GM12878 (cell line): ENCODE measurements at regions of chr15 and their contacts with region 1.

Region 1: DNA sequence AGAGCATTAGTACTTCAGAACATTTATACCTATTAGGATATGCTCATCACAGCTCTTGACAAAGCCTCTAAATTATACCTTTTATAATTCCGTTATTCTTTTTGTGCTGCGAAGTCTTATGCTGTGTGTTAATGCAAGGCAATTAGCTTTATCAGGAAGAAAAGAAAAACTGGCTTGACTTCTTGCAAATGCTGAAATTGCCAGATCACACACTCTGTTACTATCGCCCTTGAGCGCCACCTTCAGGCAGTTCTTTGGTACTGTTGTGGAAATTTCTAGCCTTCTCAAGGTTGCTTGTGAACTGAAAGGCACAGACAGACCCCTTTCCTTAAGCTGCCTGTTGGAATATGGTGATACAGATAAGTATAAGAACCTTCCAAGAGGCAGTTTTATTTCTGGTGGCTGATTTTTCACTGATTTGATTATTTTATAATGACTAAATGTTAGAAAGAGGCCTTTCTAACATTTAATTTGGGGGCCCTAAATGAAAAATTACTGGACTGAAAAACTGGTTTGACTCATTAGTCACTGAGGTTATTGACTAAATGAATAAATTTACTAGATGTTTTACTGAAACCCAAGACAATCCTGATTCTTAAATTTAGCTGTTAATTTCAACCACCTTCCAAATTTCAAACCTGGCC is 126.2 kb upstream of the RASGRP1 start:
- DNase-seq: no peak
- ATAC-seq: peak; percentile 68
- H3K4me3 ChIP-seq: no peak overlapping the region
- H3K27ac ChIP-seq: peak overlapping the region; percentile 27; the same call in 1 of the 2 replicates
- H3K4me1 ChIP-seq: peaks cover 28% of the 10 kb centered on the region
- H3K27me3 ChIP-seq: no peaks in the 10 kb centered on the region
- CTCF ChIP-seq: peak; percentile 85 to 89 (median 87); a peak in 5 of 6 replicates
- EP300 ChIP-seq: no peak
- POLR2A ChIP-seq: no peak
- RAD21 ChIP-seq: peak; percentile 79

Region 2: DNA sequence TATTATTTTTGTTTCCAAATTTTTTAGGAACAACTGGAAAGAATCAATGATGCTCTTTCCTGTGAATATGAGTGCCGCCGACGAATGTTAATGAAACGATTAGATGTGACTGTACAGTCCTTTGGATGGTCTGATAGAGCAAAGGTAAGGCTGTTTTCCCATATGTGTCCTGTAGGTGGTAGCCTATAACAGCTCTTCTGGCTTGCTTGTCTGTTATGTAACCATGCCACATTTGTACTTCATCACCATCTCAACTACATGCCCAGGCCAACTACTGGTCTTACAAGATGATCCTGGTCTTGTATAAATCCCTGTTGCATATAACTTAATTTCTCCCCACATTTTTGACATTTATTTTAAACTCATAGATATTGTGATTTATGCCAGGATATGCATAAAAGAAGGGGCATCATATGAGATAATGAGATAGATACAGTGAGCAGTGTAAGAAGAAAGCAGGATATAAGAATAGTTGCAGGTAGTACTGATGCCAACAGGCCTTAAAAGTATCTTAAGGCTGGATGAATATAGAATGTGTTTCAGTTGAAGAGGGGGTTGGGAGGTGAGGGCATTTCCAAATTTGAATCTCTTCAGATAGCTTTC is 216.6 kb before region 1 on chr15:
- CTCF ChIA-PET with region 1: interaction called, 219 read pairs
- POLR2A ChIA-PET with region 1: interaction called, 8 read pairs
- RAD21 ChIA-PET with region 1: interaction called, 148 read pairs
- SMC1A ChIA-PET with region 1: interaction called, 138 read pairs
- in situ Hi-C with region 1: no loop called
- intact Hi-C with region 1: loop called (anchors 2 kb)
- DNase-seq: peak; percentile 33
- ATAC-seq: peak; percentile 99
- H3K4me3 ChIP-seq: no peak overlapping the region
- H3K27ac ChIP-seq: no peak overlapping the region
- H3K4me1 ChIP-seq: no peaks in the 10 kb centered on the region
- H3K27me3 ChIP-seq: no peaks in the 10 kb centered on the region
- CTCF ChIP-seq: peak; percentile 67 to 92 (median 74); a peak in 5 of 6 replicates
- EP300 ChIP-seq: no peak
- POLR2A ChIP-seq: no peak
- RAD21 ChIP-seq: peak; percentile 84

Region 3: DNA sequence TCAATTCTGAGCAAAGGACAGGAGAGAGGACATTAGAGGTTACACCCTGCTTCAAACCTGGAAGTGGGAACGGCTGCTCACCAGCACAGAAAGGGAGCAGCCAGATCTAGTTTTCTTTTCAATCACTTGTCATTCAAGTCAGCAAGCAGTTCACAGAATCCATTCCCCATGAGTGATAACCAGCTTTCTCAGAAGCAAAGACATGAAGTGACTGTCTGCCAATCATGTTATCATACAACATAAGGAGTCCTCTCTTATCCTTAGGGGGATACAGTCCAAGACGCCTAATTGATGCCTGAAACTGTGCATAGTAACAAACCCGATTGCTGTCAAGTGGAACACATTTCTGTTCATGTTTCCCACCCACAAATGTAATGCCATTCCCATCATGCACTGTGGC is 182.2 kb before region 1 on chr15:
- CTCF ChIA-PET with region 1: interaction called, 37 read pairs
- POLR2A ChIA-PET with region 1: no interaction called
- RAD21 ChIA-PET with region 1: interaction called, 5 read pairs
- SMC1A ChIA-PET with region 1: interaction called, 208 read pairs
- in situ Hi-C with region 1: no loop called
- intact Hi-C with region 1: no loop called
- DNase-seq: peak; percentile 47
- ATAC-seq: peak; percentile 68
- H3K4me3 ChIP-seq: no peak overlapping the region
- H3K27ac ChIP-seq: peak overlapping the region; percentile 50
- H3K4me1 ChIP-seq: peaks cover 11% of the 10 kb centered on the region
- H3K27me3 ChIP-seq: no peaks in the 10 kb centered on the region
- CTCF ChIP-seq: no peak
- EP300 ChIP-seq: no peak
- POLR2A ChIP-seq: no peak
- RAD21 ChIP-seq: no peak

Region 4: DNA sequence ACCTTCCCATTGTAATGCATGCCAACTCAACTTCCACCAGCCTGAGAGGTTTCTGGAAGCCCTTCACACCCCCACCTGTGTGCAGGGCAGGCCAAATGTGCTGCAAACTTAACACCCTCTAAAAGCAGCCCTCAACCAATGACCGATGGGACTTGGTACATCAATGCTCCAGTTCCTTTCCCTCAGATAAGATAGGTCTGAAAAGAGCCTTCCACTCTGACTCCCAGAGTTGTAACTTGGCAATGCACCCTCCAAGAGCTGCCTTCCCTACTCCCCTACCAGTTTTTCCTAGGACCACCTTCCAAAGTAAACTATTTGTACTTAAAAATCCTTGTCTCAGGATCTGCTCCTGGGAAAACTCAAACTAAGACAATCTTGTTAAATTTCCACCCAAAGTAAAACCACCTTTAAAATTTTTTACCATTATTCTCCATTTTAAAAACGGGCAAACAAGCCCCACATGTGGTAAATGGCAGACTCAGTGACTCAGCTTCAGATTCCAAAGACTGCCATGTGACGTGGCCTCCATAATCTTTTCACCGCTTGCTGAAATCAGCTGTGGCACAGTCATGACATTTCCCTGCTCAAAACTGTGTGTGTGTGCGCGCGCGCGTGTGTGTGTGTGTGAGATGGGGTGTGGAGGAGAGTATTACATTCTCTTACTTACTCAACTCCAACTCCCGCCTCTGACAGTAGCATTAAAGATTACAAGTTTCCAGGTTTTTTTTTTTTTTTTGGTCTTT is 143.4 kb before region 1 on chr15:
- CTCF ChIA-PET with region 1: interaction called, 24 read pairs
- POLR2A ChIA-PET with region 1: no interaction called
- RAD21 ChIA-PET with region 1: interaction called, 19 read pairs
- SMC1A ChIA-PET with region 1: interaction called, 77 read pairs
- in situ Hi-C with region 1: no loop called
- intact Hi-C with region 1: no loop called
- DNase-seq: no peak
- ATAC-seq: no peak
- H3K4me3 ChIP-seq: no peak overlapping the region
- H3K27ac ChIP-seq: no peak overlapping the region
- H3K4me1 ChIP-seq: no peaks in the 10 kb centered on the region
- H3K27me3 ChIP-seq: no peaks in the 10 kb centered on the region
- CTCF ChIP-seq: no peak
- EP300 ChIP-seq: no peak
- POLR2A ChIP-seq: no peak
- RAD21 ChIP-seq: no peak

Region 5: DNA sequence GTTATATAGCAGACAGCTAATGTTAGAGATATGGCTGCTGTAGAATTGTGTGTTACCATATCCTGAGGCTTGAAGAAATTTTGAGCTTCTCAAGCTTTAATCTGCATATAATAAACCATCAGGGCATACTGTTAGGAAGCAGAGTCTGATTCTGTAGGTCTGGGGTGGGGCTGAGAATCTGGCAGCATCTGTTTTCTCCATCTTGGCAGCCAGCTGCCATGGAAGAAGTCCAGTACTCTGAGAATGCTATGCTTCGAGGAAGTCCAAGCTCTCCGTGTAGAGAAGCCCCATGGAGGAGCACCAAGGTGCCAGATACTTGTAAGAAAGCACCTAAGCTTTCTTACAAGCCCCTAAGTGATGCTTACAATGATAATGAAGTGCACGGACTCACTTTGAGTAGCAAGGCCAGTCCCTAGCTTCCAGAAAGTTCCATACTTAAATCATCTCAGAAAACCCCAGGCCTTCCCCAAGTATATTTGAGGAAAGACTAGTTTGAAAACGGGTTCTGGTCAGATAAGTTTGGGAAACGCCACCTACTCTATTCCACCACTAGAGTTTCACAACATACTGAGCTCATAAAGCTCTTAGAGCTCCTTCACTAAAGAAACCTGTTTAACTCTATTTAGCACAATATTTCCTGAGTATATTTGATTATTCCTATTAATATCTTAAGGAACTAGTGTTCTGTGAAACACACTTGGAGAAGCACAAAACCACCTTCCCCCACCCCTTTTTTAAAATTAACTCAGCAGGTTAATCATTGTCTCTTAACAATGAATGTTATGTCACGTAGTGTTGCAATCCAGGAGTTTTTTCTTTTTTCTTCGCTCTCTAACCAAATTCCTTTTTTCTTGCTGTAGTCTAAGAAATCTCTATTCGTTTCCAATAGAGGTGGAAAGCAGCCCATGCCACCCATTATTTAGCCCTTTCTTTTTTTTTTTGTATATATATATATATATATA is 66.3 kb before region 1 on chr15:
- CTCF ChIA-PET with region 1: interaction called, 52 read pairs
- POLR2A ChIA-PET with region 1: interaction called, 9 read pairs
- RAD21 ChIA-PET with region 1: interaction called, 322 read pairs
- SMC1A ChIA-PET with region 1: interaction called, 154 read pairs
- in situ Hi-C with region 1: no loop called
- intact Hi-C with region 1: no loop called
- DNase-seq: no peak
- ATAC-seq: peak; percentile 33
- H3K4me3 ChIP-seq: no peak overlapping the region
- H3K27ac ChIP-seq: no peak overlapping the region
- H3K4me1 ChIP-seq: no peaks in the 10 kb centered on the region
- H3K27me3 ChIP-seq: no peaks in the 10 kb centered on the region
- CTCF ChIP-seq: 0 out of 6 replicates have a peak, but pooled peaks of 1 of the 3 experiments have one; percentile 3
- EP300 ChIP-seq: no peak
- POLR2A ChIP-seq: no peak
- RAD21 ChIP-seq: no peak

Region 6: GRCh38 chr15:38665586-38666305 is 25.1 kb before region 1 on chr15:
- CTCF ChIA-PET with region 1: interaction called, 173 read pairs
- POLR2A ChIA-PET with region 1: interaction called, 45 read pairs
- RAD21 ChIA-PET with region 1: interaction called, 134 read pairs
- SMC1A ChIA-PET with region 1: interaction called, 225 read pairs
- in situ Hi-C with region 1: no loop called
- intact Hi-C with region 1: no loop called
- DNase-seq: no peak
- ATAC-seq: no peak
- H3K4me3 ChIP-seq: no peak overlapping the region
- H3K27ac ChIP-seq: no peak overlapping the region
- H3K4me1 ChIP-seq: peaks cover 17% of the 10 kb centered on the region
- H3K27me3 ChIP-seq: no peaks in the 10 kb centered on the region
- CTCF ChIP-seq: no peak
- EP300 ChIP-seq: no peak
- POLR2A ChIP-seq: no peak
- RAD21 ChIP-seq: no peak

Region 7: GRCh38 chr15:38768970-38769369 is 78.2 kb after region 1 on chr15:
- CTCF ChIA-PET with region 1: no interaction called
- POLR2A ChIA-PET with region 1: no interaction called
- RAD21 ChIA-PET with region 1: no interaction called
- SMC1A ChIA-PET with region 1: no interaction called
- in situ Hi-C with region 1: no loop called
- intact Hi-C with region 1: no loop called
- DNase-seq: no peak
- ATAC-seq: 0 out of 3 replicates have a peak, but pooled peaks have one; percentile 29
- H3K4me3 ChIP-seq: no peak overlapping the region
- H3K27ac ChIP-seq: no peak overlapping the region
- H3K4me1 ChIP-seq: no peaks in the 10 kb centered on the region
- H3K27me3 ChIP-seq: peaks cover 0 to 4% of the 10 kb centered on the region in 2 experiments; a peak in 2 of 4 replicates
- CTCF ChIP-seq: peak in 2 of 3 experiments; percentile 13 to 19; a peak in 2 of 6 replicates
- EP300 ChIP-seq: no peak
- POLR2A ChIP-seq: no peak
- RAD21 ChIP-seq: no peak